ENCODE measurements at regions of chr10 and their contacts with region 1.

Region 1: DNA sequence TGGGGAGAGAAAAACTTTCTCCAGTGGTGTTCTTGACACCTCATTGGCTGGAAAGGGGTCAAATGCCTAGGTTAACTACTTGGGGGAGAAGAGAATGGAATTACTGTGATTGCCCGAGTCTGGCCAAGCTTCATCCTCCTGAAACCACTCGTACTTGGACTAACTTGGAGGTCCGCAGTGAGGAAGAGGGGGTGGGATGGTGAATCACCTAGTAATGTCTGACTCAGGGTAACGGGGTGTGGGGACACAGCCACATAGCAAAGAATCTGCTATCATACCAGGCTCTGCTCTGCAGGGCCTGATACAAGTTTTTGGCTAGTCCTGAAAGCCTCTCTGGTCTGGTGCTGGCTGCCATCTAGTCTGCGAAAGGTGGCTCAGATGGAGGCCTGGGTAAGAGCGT is 190.9 kb downstream of the RPS24 start:
- DNase-seq: no peak
- H3K4me3 ChIP-seq: no peak overlapping the region
- H3K27ac ChIP-seq: no peak overlapping the region
- H3K4me1 ChIP-seq: no peaks in the 10 kb centered on the region
- H3K27me3 ChIP-seq: no peaks in the 10 kb centered on the region
- CTCF ChIP-seq: no peak

Region 2: GRCh38 chr10:78053211-78053868 is 171.3 kb before region 1 on chr10:
- CTCF ChIA-PET with region 1: no interaction called
- dilution Hi-C with region 1: loop called (anchors 10 kb)
- in situ Hi-C with region 1: no loop called
- intact Hi-C with region 1: no loop called
- DNase-seq: no peak
- H3K4me3 ChIP-seq: no peak overlapping the region
- H3K27ac ChIP-seq: no peak overlapping the region
- H3K4me1 ChIP-seq: no peaks in the 10 kb centered on the region
- H3K27me3 ChIP-seq: peaks cover 2% of the 10 kb centered on the region
- CTCF ChIP-seq: no peak

Region 3: DNA sequence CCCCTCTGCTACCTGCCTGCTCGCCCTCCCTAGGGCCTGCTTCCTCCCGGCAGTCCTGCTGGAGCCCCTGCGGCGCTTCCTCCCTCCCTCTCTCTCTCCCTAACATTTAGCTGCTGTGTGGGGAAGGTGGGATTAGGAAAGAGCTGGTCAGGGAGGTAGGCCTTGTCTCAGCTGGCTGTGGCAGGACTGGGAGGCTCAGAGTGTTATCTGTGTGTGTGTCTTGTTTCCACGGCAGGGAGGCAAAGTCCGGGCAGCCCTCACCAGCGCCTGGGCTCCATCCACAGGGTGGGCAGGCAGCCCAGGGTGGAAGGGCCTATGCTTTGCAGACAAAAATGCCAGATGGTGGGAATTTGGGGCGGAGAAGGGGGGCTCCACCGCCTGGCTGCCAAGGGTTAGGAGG is 85.3 kb before region 1 on chr10:
- CTCF ChIA-PET with region 1: no interaction called
- dilution Hi-C with region 1: no loop called
- in situ Hi-C with region 1: no loop called
- intact Hi-C with region 1: no loop called
- DNase-seq: no peak
- H3K4me3 ChIP-seq: no peak overlapping the region
- H3K27ac ChIP-seq: no peak overlapping the region
- H3K4me1 ChIP-seq: no peaks in the 10 kb centered on the region
- H3K27me3 ChIP-seq: no peaks in the 10 kb centered on the region
- CTCF ChIP-seq: no peak

Region 4: GRCh38 chr10:78178940-78179339 is 45.7 kb before region 1 on chr10:
- CTCF ChIA-PET with region 1: no interaction called
- dilution Hi-C with region 1: no loop called
- in situ Hi-C with region 1: no loop called
- intact Hi-C with region 1: loop called (anchors 1 kb)
- DNase-seq: peak; percentile 52
- H3K4me3 ChIP-seq: no peak overlapping the region
- H3K27ac ChIP-seq: no peak overlapping the region
- H3K4me1 ChIP-seq: peaks cover 22% of the 10 kb centered on the region
- H3K27me3 ChIP-seq: no peaks in the 10 kb centered on the region
- CTCF ChIP-seq: no peak